CD8-positive, alpha-beta T cell (primary cell): ENCODE measurements at regions of chr22 and their contacts with region 1.

Region 1: DNA sequence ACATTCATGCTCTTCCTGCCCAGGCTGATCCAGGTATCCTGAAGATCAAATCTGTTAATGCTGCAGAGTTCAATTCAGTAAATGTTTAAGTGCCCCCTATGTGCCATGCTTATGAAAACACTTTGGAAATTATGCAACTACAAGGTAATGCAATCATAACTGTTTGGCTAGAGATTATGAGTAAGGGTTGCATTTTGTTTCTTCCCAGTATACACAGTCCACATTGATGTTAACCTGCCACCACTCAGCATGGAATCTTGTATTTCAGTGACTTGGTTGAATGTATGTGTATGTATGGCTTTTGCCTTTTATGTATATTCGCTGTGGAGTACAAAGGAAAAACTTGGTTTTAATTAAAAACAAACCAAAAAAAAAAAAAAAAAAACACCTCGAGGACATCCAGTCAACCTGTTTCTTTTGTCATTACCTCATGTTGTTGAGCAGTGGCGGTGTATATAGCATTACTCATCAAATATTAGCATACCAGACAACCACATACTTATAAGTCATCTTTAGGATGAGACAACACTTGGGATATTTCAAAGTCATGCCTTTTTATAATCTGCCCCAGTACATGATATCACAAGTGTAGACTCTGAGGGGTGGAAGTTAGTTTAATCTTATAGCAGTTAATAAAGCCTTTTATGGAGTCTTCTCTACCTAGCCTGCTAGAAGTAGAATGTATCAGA is 86.1 kb upstream of the HORMAD2 start:
- DNase-seq: no peak
- ATAC-seq: peak; percentile 34
- H3K4me3 ChIP-seq: no peak overlapping the region
- H3K4me3 Mint-ChIP-seq: no peak overlapping the region
- H3K27ac ChIP-seq: no peak overlapping the region
- H3K27ac Mint-ChIP-seq: no peak overlapping the region
- H3K4me1 ChIP-seq: no peaks in the 10 kb centered on the region
- H3K4me1 Mint-ChIP-seq: peaks cover 2% of the 10 kb centered on the region
- H3K27me3 ChIP-seq: no peaks in the 10 kb centered on the region
- H3K27me3 Mint-ChIP-seq: no peaks in the 10 kb centered on the region
- CTCF ChIP-seq: no peak

Region 2: DNA sequence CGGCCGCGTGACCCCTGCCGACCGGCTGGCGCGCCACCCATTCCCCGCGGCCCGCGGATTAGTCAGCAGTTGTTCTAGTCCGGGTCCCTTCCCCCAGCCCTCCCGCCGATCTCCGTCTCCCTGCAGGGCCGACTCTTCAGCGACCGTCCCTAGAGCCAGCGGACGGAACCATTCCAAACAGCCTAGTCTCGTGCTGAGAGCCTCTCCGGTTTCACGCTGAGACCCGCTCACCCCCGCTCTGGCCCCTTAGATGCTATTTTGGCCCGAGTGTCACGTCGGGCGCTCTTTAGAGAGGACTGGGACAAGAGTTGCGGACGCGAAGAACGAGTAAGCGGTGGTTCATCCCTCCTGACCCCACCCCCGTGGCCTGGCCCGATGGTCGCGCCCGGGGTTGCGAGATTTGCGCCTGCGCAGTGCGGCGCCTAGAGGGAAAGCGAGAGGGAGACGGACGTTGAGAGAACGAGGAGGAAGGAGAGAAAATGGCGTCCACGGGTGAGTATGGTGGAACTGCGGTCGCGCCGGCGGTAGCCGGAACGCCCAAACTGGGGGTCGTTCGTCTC is 726.2 kb before region 1 on chr22 and contains the starts of genes EWSR1 and RHBDD3:
- CTCF ChIA-PET with region 1: no interaction called
- POLR2A ChIA-PET with region 1: no interaction called
- intact Hi-C with region 1: no loop called
- DNase-seq: peak; percentile 92 to 99 (median 96)
- ATAC-seq: peak; percentile 85
- H3K4me3 ChIP-seq: peak within 1 kb of the TSS; percentile 87 to 100
- H3K4me3 Mint-ChIP-seq: peak within 1 kb of the TSS; percentile 95
- H3K27ac ChIP-seq: peak within 1 kb of the TSS; percentile 98 to 100
- H3K27ac Mint-ChIP-seq: peak within 1 kb of the TSS; percentile 97
- H3K4me1 ChIP-seq: peaks cover 50% of the 10 kb centered on the region
- H3K4me1 Mint-ChIP-seq: peaks cover 56% of the 10 kb centered on the region
- H3K27me3 ChIP-seq: no peaks in the 10 kb centered on the region
- H3K27me3 Mint-ChIP-seq: no peaks in the 10 kb centered on the region
- CTCF ChIP-seq: no peak
- total RNA-seq, gene EWSR1: 326 to 352 TPM
- total RNA-seq, gene RHBDD3: 10.2 to 10.9 TPM

Region 3: GRCh38 chr22:29593923-29594322 is 400.2 kb before region 1 on chr22:
- CTCF ChIA-PET with region 1: no interaction called
- POLR2A ChIA-PET with region 1: no interaction called
- intact Hi-C with region 1: no loop called
- DNase-seq: no peak
- ATAC-seq: no peak
- H3K4me3 ChIP-seq: no peak overlapping the region
- H3K4me3 Mint-ChIP-seq: no peak overlapping the region
- H3K27ac ChIP-seq: no peak overlapping the region
- H3K27ac Mint-ChIP-seq: no peak overlapping the region
- H3K4me1 ChIP-seq: peaks cover 6% of the 10 kb centered on the region
- H3K4me1 Mint-ChIP-seq: peaks cover 9% of the 10 kb centered on the region
- H3K27me3 ChIP-seq: no peaks in the 10 kb centered on the region
- H3K27me3 Mint-ChIP-seq: no peaks in the 10 kb centered on the region
- CTCF ChIP-seq: no peak

Region 4: GRCh38 chr22:29883045-29883774 is 111.0 kb before region 1 on chr22 and contains the start of gene MTMR3:
- CTCF ChIA-PET with region 1: interaction called, 5 read pairs
- POLR2A ChIA-PET with region 1: no interaction called
- intact Hi-C with region 1: loop called in 1 of 2 experiments (anchors 5 kb)
- DNase-seq: peak; percentile 75 to 95 (median 93)
- ATAC-seq: peak; percentile 81
- H3K4me3 ChIP-seq: peak within 1 kb of the TSS; percentile 75 to 87
- H3K4me3 Mint-ChIP-seq: peak within 1 kb of the TSS; percentile 69
- H3K27ac ChIP-seq: peak within 1 kb of the TSS; percentile 72 to 80
- H3K27ac Mint-ChIP-seq: peak within 1 kb of the TSS; percentile 90
- H3K4me1 ChIP-seq: peaks cover 20% of the 10 kb centered on the region
- H3K4me1 Mint-ChIP-seq: peaks cover 8% of the 10 kb centered on the region
- H3K27me3 ChIP-seq: no peaks in the 10 kb centered on the region
- H3K27me3 Mint-ChIP-seq: peaks cover 3% of the 10 kb centered on the region
- CTCF ChIP-seq: peak; percentile 52
- total RNA-seq, gene MTMR3: 46.7 to 51.7 TPM

Region 5: GRCh38 chr22:30104501-30105156 is 110.5 kb after region 1 on chr22:
- CTCF ChIA-PET with region 1: no interaction called
- POLR2A ChIA-PET with region 1: no interaction called
- intact Hi-C with region 1: no loop called
- DNase-seq: peak in 1 of 9 experiments; percentile 16
- ATAC-seq: no peak
- H3K4me3 ChIP-seq: no peak overlapping the region
- H3K4me3 Mint-ChIP-seq: no peak overlapping the region
- H3K27ac ChIP-seq: no peak overlapping the region
- H3K27ac Mint-ChIP-seq: no peak overlapping the region
- H3K4me1 ChIP-seq: peaks cover 14% of the 10 kb centered on the region
- H3K4me1 Mint-ChIP-seq: peaks cover 20% of the 10 kb centered on the region
- H3K27me3 ChIP-seq: no peaks in the 10 kb centered on the region
- H3K27me3 Mint-ChIP-seq: no peaks in the 10 kb centered on the region
- CTCF ChIP-seq: no peak